Activated B cell treated with CpG ODN at 0.5 μM for 24 hours (primary cell): ENCODE measurements at regions of chr7 and their contacts with region 1.

Region 1: DNA sequence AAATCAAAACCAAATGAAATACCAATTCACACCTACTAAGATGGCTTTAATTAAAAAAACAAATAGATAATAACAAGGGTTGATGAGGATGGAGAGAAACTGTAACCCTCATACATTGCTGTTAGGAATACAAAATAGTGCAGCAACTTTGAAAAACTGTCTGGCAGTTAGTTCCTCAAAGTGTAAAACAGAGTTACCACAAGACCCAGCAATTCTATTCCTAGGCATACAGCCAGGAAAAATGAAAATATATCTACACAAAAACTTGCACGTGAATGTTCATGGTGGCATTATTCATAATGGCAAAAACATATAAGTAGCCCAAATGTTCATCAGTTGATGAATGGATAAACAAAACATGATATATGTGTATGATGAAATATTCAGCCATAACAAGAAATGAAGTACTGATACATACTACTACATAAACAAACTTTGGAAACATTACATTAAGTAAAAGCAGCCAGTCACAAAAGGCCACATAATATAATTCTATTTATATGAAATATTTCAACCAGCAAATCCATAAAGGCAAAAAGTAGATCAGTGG is 83.5 kb downstream of the BRAF start:
- DNase-seq: no peak
- ATAC-seq: no peak
- H3K4me3 Mint-ChIP-seq: no peak overlapping the region
- H3K27ac Mint-ChIP-seq: no peak overlapping the region
- H3K4me1 Mint-ChIP-seq: no peaks in the 10 kb centered on the region
- H3K27me3 Mint-ChIP-seq: no peaks in the 10 kb centered on the region
- CTCF ChIP-seq: no peak

Region 2: DNA sequence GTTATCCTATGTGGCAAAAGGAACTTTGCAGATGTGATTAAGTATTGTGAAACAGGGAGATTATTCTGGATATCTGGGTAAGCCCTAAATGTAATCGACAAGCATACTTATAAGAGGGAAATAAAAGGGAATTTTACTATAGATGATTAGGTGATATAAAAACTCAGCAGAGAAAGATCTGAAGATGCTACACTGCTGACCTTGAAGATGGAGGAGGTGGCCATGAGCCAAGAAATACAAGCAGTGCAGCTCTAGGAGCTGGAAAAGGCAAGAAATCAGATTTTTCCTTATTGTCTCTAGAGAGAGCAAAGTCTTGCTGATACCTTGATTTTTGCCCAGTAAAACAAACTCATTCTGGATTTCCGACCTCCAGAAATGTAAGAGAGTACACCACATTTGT is 15.8 kb after region 1 on chr7:
- CTCF ChIA-PET with region 1: no interaction called
- POLR2A ChIA-PET with region 1: no interaction called
- intact Hi-C with region 1: no loop called
- DNase-seq: no peak
- ATAC-seq: no peak
- H3K4me3 Mint-ChIP-seq: no peak overlapping the region
- H3K27ac Mint-ChIP-seq: no peak overlapping the region
- H3K4me1 Mint-ChIP-seq: peaks cover 34% of the 10 kb centered on the region
- H3K27me3 Mint-ChIP-seq: no peaks in the 10 kb centered on the region
- CTCF ChIP-seq: no peak

Region 3: DNA sequence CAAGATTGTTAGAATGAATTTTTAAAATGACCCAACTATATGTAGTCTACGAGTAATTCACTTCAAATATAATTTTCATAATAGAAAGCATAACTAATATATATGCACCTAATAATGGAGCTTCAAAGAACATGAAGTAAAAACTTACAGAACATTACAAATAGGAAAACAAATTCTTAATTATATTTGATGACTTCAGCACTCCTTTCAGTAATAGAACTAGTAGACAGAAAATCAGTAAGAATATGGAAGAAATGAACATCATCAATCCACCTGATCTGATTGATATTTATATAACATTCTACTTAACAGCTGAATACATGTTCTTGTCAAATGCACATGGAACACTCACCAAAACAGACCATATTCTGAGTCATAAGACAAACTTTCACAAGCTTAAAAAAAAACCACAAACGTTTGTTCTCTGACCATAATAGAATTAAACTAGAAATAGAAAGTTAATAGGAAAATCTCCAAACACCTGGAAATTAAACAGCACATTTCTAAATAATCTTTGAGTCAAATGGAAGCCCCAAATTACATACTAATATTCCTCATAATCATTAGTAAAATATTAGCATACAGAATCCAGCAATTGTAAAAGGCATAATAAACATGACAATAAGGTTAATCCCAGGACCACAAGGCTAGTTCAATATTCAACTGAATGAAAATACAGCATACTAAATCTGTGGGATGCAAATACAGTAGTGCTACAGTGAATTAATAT is 35.4 kb after region 1 on chr7:
- CTCF ChIA-PET with region 1: no interaction called
- POLR2A ChIA-PET with region 1: interaction called, 4 read pairs
- intact Hi-C with region 1: loop called (anchors 5 kb)
- DNase-seq: no peak
- ATAC-seq: no peak
- H3K4me3 Mint-ChIP-seq: no peak overlapping the region
- H3K27ac Mint-ChIP-seq: no peak overlapping the region
- H3K4me1 Mint-ChIP-seq: peaks cover 57% of the 10 kb centered on the region
- H3K27me3 Mint-ChIP-seq: no peaks in the 10 kb centered on the region
- CTCF ChIP-seq: no peak

Region 4: GRCh38 chr7:140911746-140912145 is 70.5 kb after region 1 on chr7:
- CTCF ChIA-PET with region 1: no interaction called
- POLR2A ChIA-PET with region 1: no interaction called
- intact Hi-C with region 1: no loop called
- DNase-seq: no peak
- ATAC-seq: no peak
- H3K4me3 Mint-ChIP-seq: no peak overlapping the region
- H3K27ac Mint-ChIP-seq: no peak overlapping the region
- H3K4me1 Mint-ChIP-seq: peaks cover 55% of the 10 kb centered on the region
- H3K27me3 Mint-ChIP-seq: no peaks in the 10 kb centered on the region
- CTCF ChIP-seq: no peak

Region 5: GRCh38 chr7:141076377-141076776 is 235.1 kb after region 1 on chr7:
- CTCF ChIA-PET with region 1: no interaction called
- POLR2A ChIA-PET with region 1: no interaction called
- intact Hi-C with region 1: no loop called
- DNase-seq: no peak
- ATAC-seq: no peak
- H3K4me3 Mint-ChIP-seq: no peak overlapping the region
- H3K27ac Mint-ChIP-seq: no peak overlapping the region
- H3K4me1 Mint-ChIP-seq: peaks cover 21% of the 10 kb centered on the region
- H3K27me3 Mint-ChIP-seq: peaks cover 25% of the 10 kb centered on the region
- CTCF ChIP-seq: no peak